Cardiac septum (tissue), 1 donor: ENCODE measurements at regions of chr9 and their contacts with region 1.

Region 1: GRCh38 chr9:109012876-109013678 is at the start of gene CTNNAL1:
- DNase-seq: peak; percentile 97
- total RNA-seq, gene CTNNAL1: 72.8 TPM

Region 2: DNA sequence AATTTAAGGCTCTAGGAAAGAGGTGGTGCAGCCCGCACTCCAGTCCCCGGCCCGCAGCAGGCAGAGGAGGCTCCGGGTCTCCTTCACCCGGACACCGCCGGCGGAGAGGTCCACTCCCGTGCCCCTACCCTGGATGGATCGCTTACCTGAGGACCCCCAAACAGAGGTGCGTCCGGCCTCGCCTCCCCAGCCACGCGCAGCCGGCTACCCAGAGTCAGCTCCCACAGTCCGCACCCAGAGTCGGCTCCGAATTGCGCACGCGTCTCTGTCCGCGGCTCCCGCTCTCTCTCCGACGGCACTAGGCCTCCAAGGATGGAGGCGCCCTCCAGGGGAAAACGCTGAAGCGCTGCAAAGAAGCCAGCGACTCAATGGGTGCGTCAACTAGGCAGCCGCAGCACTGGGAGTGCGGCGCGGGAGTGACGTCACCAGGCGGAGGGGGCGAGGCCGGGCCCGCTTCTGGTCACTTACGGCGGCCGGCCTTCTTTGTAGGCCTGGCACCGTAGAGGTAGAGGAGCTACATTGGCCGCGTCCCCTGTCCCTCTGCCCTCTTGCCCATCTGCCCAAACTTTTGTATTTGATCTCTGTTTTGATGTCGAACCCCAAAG is 79.3 kb before region 1 on chr9 and contains the start of gene ELP1:
- intact Hi-C with region 1: loop called (anchors 5 kb)
- DNase-seq: peak; percentile 97
- total RNA-seq, gene ELP1: 24.2 TPM

Region 3: DNA sequence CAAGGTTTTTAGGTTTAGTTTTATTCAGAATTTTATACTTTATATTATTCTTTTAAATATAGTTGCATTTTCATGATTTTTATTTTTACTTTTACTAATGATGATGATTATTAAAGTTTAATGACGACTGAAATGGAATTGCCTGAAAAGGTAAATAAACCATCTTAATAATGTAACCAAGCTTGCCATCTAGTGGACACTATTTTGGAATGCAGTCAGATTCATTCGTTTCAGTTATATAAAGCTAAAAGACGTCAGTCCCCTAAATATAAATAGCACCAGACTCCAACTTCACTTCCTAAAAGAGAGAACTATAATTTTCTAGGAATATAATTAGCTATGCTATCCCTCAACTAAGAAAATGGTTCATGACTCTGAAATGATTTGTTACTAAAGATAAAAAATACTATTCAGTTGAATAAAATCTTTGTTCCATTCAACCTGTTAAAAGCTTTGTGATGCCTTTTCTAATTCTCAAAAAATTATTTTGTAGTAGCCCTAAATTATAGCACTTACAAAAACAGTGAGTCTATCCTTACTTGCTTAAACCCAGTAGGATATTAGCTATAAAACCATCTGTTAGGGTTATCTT is 59.0 kb before region 1 on chr9:
- intact Hi-C with region 1: loop called (anchors 5 kb)
- DNase-seq: no peak

Region 4: DNA sequence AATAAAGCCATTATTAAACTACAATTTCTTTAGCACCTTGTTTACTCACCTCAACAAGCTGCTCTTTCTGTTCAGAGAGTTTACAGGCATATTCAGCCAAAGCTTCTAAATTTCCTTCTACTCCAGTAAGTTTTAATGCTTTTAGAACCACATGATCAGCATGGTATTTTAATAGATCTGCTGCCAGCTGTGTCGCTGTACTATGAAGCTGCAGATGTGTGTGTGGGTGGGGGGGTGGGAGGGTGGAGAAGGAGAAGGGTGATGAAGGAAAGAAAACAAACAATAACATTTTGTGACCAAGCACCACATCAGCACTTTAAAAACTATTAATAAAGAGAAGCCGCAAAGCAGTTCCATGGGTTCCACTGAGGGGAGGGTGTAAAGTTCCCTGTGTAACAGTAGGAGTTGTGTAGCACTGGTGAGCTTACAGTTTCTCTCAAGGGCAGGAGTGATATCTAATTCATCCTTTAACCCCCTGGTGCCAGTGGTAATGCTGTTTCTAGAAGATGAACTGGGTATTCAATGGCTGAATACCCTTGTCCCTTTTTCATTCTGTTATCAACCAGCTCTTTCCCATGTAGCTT is 40.4 kb before region 1 on chr9:
- intact Hi-C with region 1: loop called (anchors 5 kb)
- DNase-seq: no peak

Region 5: DNA sequence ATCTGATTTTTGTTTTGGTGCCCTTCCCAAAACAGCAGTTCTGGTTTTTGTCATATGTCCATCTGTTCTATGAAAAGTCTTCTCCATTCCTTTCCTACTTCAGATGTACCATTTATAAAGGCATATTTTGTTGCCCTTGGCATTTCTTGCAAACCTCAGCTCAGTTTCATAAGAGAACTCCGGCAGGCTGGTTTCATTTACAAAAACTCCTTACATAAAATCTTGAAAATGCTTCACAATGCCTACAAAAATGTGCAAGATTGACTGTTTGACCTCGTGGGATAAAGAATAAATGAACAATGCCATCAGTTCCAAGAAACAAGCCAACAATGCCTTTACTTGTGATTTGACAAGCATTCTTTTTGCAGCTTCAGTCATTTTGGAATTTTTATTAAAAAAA is 39.3 kb after region 1 on chr9:
- intact Hi-C with region 1: no loop called
- DNase-seq: no peak

Region 6: GRCh38 chr9:109063760-109064159 is 50.7 kb after region 1 on chr9:
- intact Hi-C with region 1: no loop called
- DNase-seq: no peak

Region 7: GRCh38 chr9:109119439-109120203 is 106.5 kb after region 1 on chr9 and contains the start of gene TMEM245:
- intact Hi-C with region 1: loop called (anchors 2 kb)
- DNase-seq: peak; percentile 97
- total RNA-seq, gene TMEM245: 73.7 TPM

Region 8: GRCh38 chr9:109150925-109151545 is 138.0 kb after region 1 on chr9:
- intact Hi-C with region 1: no loop called
- DNase-seq: no peak